Thyroid gland (tissue), 4 donors: ENCODE measurements at regions of chr17 and their contacts with region 1.

Region 1: DNA sequence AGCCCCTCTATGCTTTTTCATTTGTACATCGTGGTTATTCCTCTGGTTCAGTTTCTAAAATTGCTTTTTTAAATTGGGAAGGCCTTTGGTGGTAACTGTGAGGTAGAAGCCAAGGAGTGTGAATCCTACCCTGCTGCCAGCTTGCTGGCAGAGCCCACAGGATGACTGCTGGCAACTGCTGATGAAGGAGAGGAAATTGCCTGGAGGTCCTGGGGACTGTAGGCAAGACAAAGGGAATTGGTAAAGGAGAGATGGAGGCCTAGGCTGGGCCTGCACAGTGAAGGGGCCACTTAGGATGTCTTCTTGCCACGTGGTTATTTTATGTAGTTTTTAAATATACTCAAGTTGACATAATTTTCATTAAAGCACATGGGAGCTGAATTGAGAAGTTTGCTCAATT is 15.8 kb downstream of the C17orf58 start:
- DNase-seq: peak in 1 of 2 donors; percentile 22
- H3K4me3 ChIP-seq: no peak overlapping the region
- H3K27ac ChIP-seq: no peak overlapping the region
- H3K4me1 ChIP-seq: peaks cover 3 to 10% of the 10 kb centered on the region in 2 donors
- H3K27me3 ChIP-seq: no peaks in the 10 kb centered on the region
- CTCF ChIP-seq: no peak
- POLR2A ChIP-seq: no peak

Region 2: DNA sequence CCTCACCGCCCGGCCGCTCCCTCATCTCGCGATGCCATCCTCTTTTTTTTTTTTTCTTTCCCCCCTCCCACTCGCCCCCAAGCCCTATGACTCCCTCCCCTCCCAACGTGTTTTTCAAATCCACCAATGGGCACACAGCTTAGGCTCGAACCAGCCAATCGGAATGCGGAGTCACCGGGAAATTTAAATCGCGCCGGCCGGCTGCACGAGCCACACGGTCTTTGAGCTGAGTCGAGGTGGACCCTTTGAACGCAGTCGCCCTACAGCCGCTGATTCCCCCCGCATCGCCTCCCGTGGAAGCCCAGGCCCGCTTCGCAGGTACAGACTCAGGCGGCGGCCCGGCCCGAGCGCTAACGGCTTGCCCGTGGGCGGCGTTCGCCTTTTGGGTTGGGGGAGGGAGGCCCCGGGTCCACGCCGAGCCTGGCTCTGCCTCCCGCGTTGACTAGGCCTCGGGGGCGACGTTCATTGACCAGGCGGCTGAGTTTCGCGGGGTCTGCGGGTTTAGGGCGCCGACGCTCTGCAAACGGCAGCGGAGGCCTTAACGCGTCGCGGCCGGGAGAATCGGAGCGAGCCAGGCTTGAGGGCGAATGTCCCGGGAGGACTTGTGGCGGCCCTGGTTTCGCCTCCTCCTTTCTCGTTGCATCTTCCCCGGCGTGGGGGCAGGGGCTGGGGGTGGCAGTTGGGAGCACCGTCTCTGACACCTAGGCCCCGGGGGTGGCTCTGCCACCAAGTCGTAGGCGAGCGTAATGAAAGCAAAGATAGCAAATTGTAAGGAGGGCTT is 55.3 kb after region 1 on chr17 and contains the start of gene KPNA2:
- intact Hi-C with region 1: loop called (anchors 10 kb)
- DNase-seq: peak; percentile 92 to 93
- H3K4me3 ChIP-seq: peak within 1 kb of the TSS; percentile 72 to 99 (median 84)
- H3K27ac ChIP-seq: peak within 1 kb of the TSS in 2 of 3 donors; percentile 56 to 77
- H3K4me1 ChIP-seq: peaks cover 7 to 13% of the 10 kb centered on the region in 2 donors
- H3K27me3 ChIP-seq: no peaks in the 10 kb centered on the region
- CTCF ChIP-seq: no peak
- POLR2A ChIP-seq: peak in 1 of 2 donors; percentile 85
- total RNA-seq, gene KPNA2: 13.3 to 25.8 (median 17.5) TPM

Region 3: GRCh38 chr17:68080411-68081150 is 100.1 kb after region 1 on chr17:
- intact Hi-C with region 1: no loop called
- DNase-seq: no peak
- H3K4me3 ChIP-seq: no peak overlapping the region
- H3K27ac ChIP-seq: no peak overlapping the region
- H3K4me1 ChIP-seq: no peaks in the 10 kb centered on the region
- H3K27me3 ChIP-seq: no peaks in the 10 kb centered on the region
- CTCF ChIP-seq: no peak
- POLR2A ChIP-seq: no peak